ENCODE measurements at regions of chr9 and their contacts with region 1.

Region 1: DNA sequence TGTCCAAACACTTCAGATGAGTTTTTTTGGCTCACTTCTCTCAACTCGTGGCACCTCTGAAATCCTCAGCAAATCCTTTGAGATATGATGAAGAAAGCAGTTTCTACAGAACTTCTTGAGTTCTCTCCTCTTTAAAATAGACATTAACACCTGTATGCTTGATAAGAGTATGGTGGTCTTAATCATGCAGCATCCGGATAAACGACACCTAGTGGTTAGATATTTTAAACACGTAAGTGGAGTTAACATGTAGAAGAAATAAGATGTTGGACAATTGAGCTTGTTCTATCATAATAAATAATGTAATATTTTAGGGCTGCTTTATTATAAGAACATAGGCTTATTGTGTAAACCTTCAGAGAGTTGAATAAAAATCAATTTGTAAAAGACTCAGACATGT is 324.8 kb downstream of the CYLC2 start:
- DNase-seq: no peak
- ATAC-seq: no peak
- H3K4me3 ChIP-seq: no peak overlapping the region
- H3K4me3 Mint-ChIP-seq: no peak overlapping the region
- H3K27ac ChIP-seq: no peak overlapping the region
- H3K27ac Mint-ChIP-seq: no peak overlapping the region
- H3K4me1 ChIP-seq: no peaks in the 10 kb centered on the region
- H3K4me1 Mint-ChIP-seq: no peaks in the 10 kb centered on the region
- H3K27me3 ChIP-seq: no peaks in the 10 kb centered on the region
- H3K27me3 Mint-ChIP-seq: no peaks in the 10 kb centered on the region

Region 2: DNA sequence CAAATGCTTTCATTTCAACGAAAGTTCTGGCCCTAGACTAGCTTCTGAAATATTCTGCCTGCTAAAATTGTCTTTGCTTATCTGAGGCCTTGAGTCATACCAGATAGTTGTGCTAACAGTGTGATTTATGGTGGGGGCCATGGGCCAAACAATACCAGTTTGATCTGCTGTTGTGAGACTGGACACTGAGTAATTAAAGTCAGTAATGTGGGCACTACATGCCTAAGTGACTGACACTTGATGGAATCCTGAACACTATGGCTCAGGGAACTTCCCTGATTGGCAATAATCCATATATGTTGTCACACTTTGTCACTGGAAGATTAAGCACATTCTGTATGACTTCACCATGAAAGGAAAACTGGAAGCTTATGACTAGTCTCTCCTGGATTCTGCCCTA is 452.5 kb before region 1 on chr9:
- CTCF ChIA-PET with region 1: no interaction called
- POLR2A ChIA-PET with region 1: no interaction called
- intact Hi-C with region 1: loop called in 1 of 2 experiments (anchors 10 kb)
- DNase-seq: no peak
- ATAC-seq: no peak
- H3K4me3 ChIP-seq: no peak overlapping the region
- H3K4me3 Mint-ChIP-seq: no peak overlapping the region
- H3K27ac ChIP-seq: no peak overlapping the region
- H3K27ac Mint-ChIP-seq: no peak overlapping the region
- H3K4me1 ChIP-seq: no peaks in the 10 kb centered on the region
- H3K4me1 Mint-ChIP-seq: no peaks in the 10 kb centered on the region
- H3K27me3 ChIP-seq: no peaks in the 10 kb centered on the region
- H3K27me3 Mint-ChIP-seq: no peaks in the 10 kb centered on the region

Measured in naive thymus-derived CD4-positive, alpha-beta T cell (primary cell).